ENCODE measurements at regions of chr3 and their contacts with region 1.

Region 1: DNA sequence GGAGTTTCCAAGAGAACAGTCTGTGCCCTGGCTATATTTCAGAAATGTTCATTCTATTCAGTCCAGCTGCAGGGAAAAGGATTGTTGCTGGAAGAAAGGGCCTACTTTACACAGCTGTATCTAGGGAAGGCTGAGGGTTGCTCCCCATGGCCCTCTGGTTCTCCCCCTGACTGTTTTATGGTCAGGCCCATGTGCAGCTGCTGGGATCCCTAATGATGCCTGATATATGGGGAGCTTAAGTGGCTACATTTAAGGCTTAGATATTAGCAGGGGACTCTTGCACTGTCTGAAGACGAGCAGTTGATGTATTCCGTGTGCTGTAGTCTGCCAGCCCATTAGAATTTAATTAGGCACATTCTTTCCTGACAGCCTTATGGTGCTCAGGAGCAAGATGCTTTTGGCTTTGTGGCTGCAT is 72.0 kb downstream of the FAM43A start:
- DNase-seq: peak in 5 of 10 donors; percentile 43 to 59 (median 45)
- H3K4me3 ChIP-seq: peak overlapping the region in 10 of 59 donors; percentile 2 to 43 (median 20)
- H3K27ac ChIP-seq: peak overlapping the region in 58 of 59 donors; percentile 14 to 97 (median 86)
- H3K27me3 ChIP-seq: peaks cover 0 to 5% (median 0%) of the 10 kb centered on the region in 45 donors
- CTCF ChIP-seq: peak in 1 of 56 donors; percentile 0

Region 2: DNA sequence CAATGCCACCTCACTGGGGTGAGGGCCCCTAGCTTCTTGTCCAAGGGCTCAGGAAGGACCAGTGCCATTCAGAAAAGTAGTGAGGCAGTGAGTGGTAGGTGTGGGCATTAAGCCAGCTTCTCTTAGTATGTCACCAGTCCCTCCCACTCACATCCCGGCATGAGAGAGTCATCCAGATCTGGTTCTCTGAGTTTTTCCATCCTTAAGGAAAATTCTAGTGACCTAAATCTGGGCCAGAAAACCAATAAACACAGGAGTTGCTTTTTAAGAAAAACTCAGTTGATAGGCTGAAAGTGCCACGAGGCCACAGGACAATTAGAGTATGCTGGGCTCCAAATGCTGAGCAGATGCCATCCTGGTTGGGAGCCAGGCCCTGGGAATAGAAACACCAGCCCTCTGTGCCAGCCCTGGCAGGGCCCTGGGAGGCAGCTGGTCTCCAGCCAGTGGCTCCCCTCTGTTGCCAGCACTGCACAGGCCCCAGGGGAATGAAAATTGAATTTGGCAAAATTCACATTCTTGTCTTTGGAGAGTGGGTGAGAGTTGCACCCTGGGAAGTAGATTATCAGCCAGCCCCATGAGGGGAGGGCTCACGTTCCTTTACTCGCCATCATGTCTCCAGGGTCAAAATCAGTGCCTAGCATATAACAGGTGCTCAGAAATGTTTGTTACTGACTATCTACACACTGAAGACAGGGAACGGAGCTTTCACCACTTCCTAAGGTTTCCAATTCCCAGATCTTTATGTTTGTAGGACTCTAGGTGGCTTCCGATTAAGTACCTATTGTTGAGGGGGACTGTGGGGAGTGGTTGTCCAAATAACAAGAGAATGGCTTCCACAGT is 19.2 kb before region 1 on chr3:
- intact Hi-C with region 1: loop called in 1 of 2 experiments (anchors 2 kb)
- DNase-seq: peak; percentile 74 to 92 (median 88)
- H3K4me3 ChIP-seq: no peak overlapping the region
- H3K27ac ChIP-seq: peak overlapping the region in 13 of 59 donors; percentile 8 to 53 (median 30)
- H3K27me3 ChIP-seq: peaks cover 0 to 4% (median 0%) of the 10 kb centered on the region in 45 donors
- CTCF ChIP-seq: peak in 2 of 56 donors; percentile 22

Region 3: GRCh38 chr3:194814878-194815357 is 57.3 kb after region 1 on chr3:
- intact Hi-C with region 1: loop called in 1 of 2 experiments (anchors 5 kb)
- DNase-seq: peak in 4 of 10 donors; percentile 12 to 61 (median 32)
- H3K4me3 ChIP-seq: peak overlapping the region in 4 of 59 donors; percentile 5 to 22 (median 13)
- H3K27ac ChIP-seq: peak overlapping the region in 33 of 59 donors; percentile 1 to 74 (median 46)
- H3K27me3 ChIP-seq: peaks cover 0 to 4% (median 0%) of the 10 kb centered on the region in 45 donors
- CTCF ChIP-seq: no peak

Region 4: GRCh38 chr3:195106418-195106906 is 348.8 kb after region 1 on chr3:
- intact Hi-C with region 1: loop called (anchors 5 to 10 kb)
- DNase-seq: peak; percentile 45 to 83 (median 64)
- H3K4me3 ChIP-seq: peak overlapping the region in 58 of 59 donors; percentile 7 to 62 (median 38)
- H3K27ac ChIP-seq: peak overlapping the region in 8 of 59 donors; percentile 14 to 67 (median 40)
- H3K27me3 ChIP-seq: no peaks in the 10 kb centered on the region
- CTCF ChIP-seq: peak; percentile 95 to 100 (median 99)